Activated CD4-positive, alpha-beta memory T cell treated with anti-CD3 and anti-CD28 coated beads for 36 hours (primary cell): ENCODE measurements at regions of chrX and their contacts with region 1.

Region 1: DNA sequence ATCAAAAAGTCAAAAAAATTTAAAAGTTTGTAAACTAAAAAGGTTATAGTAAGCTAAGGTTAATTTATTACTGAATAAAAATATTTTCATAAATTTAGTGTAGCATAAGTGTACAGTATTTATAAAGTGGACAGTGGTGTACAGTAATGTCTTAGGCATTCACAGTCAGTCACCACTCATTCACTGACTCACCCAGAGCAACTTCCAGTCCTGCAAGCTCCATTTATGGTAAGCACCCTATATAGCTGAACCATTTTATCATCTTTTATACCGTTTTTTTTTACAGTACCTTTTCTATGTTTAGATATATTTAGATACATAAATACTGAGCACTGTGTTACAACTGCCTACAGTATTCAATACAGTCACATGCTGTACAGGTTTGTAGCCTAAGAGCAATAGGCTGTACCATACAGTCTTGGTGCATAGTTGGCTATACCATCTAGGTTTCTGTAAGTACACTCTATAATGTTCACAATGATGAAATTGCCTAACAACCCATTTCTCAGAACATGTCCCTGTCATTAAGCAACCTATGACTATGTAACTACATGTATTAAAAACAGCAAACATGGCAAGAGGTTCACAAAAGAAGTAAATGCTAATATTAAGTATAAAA is 18.6 kb downstream of the ACSL4 start:
- DNase-seq: no peak
- H3K4me3 Mint-ChIP-seq: no peak overlapping the region
- H3K27ac Mint-ChIP-seq: no peak overlapping the region
- H3K4me1 Mint-ChIP-seq: peaks cover 42% of the 10 kb centered on the region
- H3K27me3 Mint-ChIP-seq: no peaks in the 10 kb centered on the region

Region 2: GRCh38 chrX:109751698-109752097 is 37.2 kb after region 1 on chrX:
- CTCF ChIA-PET with region 1: no interaction called
- POLR2A ChIA-PET with region 1: no interaction called
- intact Hi-C with region 1: no loop called
- DNase-seq: no peak
- H3K4me3 Mint-ChIP-seq: no peak overlapping the region
- H3K27ac Mint-ChIP-seq: no peak overlapping the region
- H3K4me1 Mint-ChIP-seq: no peaks in the 10 kb centered on the region
- H3K27me3 Mint-ChIP-seq: no peaks in the 10 kb centered on the region

Region 3: DNA sequence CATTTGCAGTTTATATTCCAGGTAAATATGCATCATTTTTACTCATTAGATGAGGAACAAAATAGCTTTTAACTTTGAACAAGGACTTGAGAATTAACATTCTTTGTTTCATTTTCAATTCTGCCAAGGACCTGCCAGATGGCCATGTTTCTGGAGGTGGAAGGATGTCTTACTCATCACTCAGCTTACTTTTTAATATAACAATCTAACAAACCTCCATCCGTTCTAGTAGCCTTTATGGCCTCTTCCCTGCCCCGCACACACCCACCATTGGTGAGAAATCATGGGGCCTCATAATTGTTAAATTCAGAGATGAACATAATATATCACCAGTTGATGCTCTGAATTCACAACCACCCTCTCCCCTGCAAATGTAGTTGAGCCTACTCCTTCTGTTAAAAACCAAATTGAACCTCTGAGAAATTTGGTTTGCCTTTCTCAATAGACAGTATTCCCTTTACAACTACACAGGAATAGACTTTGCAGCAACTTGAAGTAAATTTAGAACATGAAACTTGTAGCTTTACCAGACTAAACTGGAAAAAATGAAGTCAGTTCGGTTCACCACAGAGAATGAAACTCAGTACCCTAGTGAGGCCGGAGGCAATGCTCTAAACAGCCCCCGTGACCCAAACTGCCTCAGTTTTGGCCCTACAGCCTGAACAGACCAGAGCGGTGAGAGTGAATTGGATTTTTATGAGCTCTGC is 68.7 kb after region 1 on chrX:
- CTCF ChIA-PET with region 1: no interaction called
- POLR2A ChIA-PET with region 1: no interaction called
- intact Hi-C with region 1: loop called (anchors 5 kb)
- DNase-seq: peak; percentile 16
- H3K4me3 Mint-ChIP-seq: peak overlapping the region; percentile 34
- H3K27ac Mint-ChIP-seq: peak overlapping the region; percentile 69
- H3K4me1 Mint-ChIP-seq: peaks cover 13% of the 10 kb centered on the region
- H3K27me3 Mint-ChIP-seq: no peaks in the 10 kb centered on the region